Sigmoid colon (tissue), 7 donors: ENCODE measurements at regions of chr6 and their contacts with region 1.

Region 1: GRCh38 chr6:41424370-41425058 is 89.1 kb downstream of the NCR2 start:
- DNase-seq: peak; percentile 90
- H3K4me3 ChIP-seq: no peak overlapping the region
- H3K27ac ChIP-seq: peak overlapping the region in 1 of 4 donors; percentile 9
- H3K4me1 ChIP-seq: peaks cover 0 to 38% (median 29%) of the 10 kb centered on the region in 4 donors
- H3K27me3 ChIP-seq: no peaks in the 10 kb centered on the region
- CTCF ChIP-seq: peak; percentile 65 to 93 (median 88)
- EP300 ChIP-seq: no peak
- POLR2A ChIP-seq: no peak

Region 2: DNA sequence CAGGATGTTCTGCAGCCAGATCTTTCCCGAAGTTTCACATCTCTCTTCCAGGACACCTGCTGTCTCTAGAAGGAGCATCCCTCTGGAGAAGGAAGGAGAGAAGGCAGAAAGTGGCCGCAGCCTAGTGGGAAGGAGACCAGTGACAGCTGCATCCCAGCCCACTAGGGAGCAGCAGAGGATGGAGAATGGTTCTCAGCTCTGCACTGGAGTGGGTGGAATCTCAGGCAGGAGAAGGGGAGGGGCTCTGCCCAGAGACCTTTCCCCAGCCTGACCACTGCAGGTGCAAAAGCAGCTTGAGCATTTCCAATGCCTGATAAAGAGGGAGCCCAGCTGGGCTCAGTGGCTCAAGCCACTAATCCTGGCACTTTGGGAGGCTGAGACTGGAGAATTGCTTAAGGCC is 56.8 kb before region 1 on chr6:
- intact Hi-C with region 1: loop called (anchors 2 kb)
- DNase-seq: no peak
- H3K4me3 ChIP-seq: no peak overlapping the region
- H3K27ac ChIP-seq: no peak overlapping the region
- H3K4me1 ChIP-seq: peaks cover 0 to 24% (median 21%) of the 10 kb centered on the region in 4 donors
- H3K27me3 ChIP-seq: peaks cover 6 to 33% (median 19%) of the 10 kb centered on the region in 3 donors
- CTCF ChIP-seq: peak in 3 of 4 experiments; percentile 36 to 47 (median 37)
- EP300 ChIP-seq: no peak
- POLR2A ChIP-seq: no peak

Region 3: DNA sequence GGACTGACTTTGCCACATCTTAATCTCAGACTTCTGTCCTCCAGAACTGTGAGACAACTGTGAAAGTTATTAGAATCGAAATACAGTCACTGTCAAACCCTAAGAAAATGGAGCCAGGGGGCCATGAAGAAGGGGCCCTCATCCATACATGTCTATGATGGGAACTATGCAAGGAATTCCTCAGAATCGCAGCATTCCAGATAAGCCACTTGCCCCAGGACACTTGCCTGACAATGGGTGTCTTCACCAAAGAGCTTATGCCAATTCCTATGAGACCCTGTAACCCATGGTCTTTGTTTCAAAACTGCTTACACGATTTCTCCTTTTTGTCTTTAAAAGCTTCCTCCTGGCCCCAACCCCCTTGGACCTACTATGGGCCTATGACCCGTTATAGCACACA is 31.3 kb after region 1 on chr6:
- intact Hi-C with region 1: loop called (anchors 5 kb)
- DNase-seq: no peak
- H3K4me3 ChIP-seq: no peak overlapping the region
- H3K27ac ChIP-seq: no peak overlapping the region
- H3K4me1 ChIP-seq: peaks cover 0 to 46% (median 36%) of the 10 kb centered on the region in 4 donors
- H3K27me3 ChIP-seq: no peaks in the 10 kb centered on the region
- CTCF ChIP-seq: no peak
- EP300 ChIP-seq: no peak
- POLR2A ChIP-seq: no peak

Region 4: GRCh38 chr6:41545703-41546474 is 121.4 kb after region 1 on chr6 and contains the start of gene FOXP4:
- intact Hi-C with region 1: loop called (anchors 2 kb)
- DNase-seq: peak; percentile 96
- H3K4me3 ChIP-seq: peak within 1 kb of the TSS; percentile 57 to 96 (median 95)
- H3K27ac ChIP-seq: peak within 1 kb of the TSS; percentile 86 to 92 (median 88)
- H3K4me1 ChIP-seq: peaks cover 0 to 48% (median 37%) of the 10 kb centered on the region in 4 donors
- H3K27me3 ChIP-seq: no peaks in the 10 kb centered on the region
- CTCF ChIP-seq: no peak
- EP300 ChIP-seq: no peak
- POLR2A ChIP-seq: no peak
- total RNA-seq, gene FOXP4: 4.1 to 14.1 (median 5.8) TPM

Region 5: GRCh38 chr6:41683510-41684310 is 259.2 kb after region 1 on chr6:
- intact Hi-C with region 1: loop called (anchors 2 kb)
- DNase-seq: peak; percentile 90
- H3K4me3 ChIP-seq: peak overlapping the region; percentile 30 to 50 (median 46)
- H3K27ac ChIP-seq: peak overlapping the region; percentile 57 to 70 (median 62)
- H3K4me1 ChIP-seq: peaks cover 0 to 26% (median 22%) of the 10 kb centered on the region in 4 donors
- H3K27me3 ChIP-seq: no peaks in the 10 kb centered on the region
- CTCF ChIP-seq: peak; percentile 83 to 90 (median 89)
- EP300 ChIP-seq: no peak
- POLR2A ChIP-seq: no peak